ENCODE measurements at regions of chr7 and their contacts with region 1.

Region 1: DNA sequence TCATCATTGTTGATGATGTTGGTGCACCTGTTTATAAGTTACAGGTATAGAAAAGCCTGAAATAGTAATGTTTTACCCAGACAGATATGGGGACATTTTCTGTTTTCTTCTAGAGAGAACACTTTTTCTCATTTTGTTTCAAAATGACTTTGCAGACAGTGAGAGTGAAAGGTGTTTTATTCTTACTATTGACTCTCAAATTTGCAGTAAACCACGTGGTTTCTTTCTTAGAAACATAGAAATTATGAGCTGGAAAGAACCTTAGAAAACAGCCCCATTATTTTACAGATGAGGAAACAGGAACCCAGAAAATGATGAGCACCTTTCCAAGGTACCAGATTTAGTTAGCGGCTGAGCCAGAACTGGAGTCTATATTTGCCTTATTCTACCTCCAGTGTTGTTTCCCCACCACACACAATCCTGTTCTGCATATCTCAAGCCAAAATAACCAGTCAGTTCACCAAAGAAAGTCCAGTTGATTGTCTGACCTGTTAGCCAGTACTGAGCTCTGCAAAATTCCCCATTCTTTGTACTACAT is 138.9 kb upstream of the AHR start:
- DNase-seq: peak; percentile 66
- H3K4me3 Mint-ChIP-seq: peak overlapping the region; percentile 2
- H3K27ac Mint-ChIP-seq: peak overlapping the region; percentile 78
- H3K4me1 Mint-ChIP-seq: peaks cover 37% of the 10 kb centered on the region
- H3K27me3 Mint-ChIP-seq: peaks cover 13% of the 10 kb centered on the region

Region 2: DNA sequence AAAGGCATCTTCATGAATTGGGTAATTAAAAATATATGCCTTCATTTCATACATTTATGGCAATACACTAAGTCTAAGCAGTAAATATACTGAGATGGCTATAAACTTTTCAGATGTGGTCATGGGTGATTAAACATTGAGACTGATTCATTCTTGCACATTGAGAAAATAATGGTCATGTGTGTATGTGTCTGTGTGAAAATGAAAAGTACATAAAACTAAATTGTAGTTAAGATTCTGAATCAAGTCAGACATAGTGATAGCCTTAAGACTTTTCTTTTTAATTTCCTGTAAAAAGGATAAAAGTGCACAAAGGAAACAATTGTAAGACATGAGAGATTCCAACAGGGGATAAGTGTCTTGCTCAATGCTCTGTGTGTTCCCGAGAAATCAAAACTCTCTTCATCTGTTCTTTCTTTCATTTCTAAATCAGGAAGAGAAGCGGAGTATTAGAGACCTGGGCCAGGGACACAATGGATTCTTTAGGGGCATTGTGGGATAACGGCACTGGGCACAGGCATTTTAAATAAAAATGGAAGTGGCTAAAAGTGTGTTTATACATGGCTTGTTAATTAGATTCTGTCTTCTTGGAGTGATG is 208.0 kb before region 1 on chr7:
- intact Hi-C with region 1: no loop called
- DNase-seq: no peak
- H3K4me3 Mint-ChIP-seq: no peak overlapping the region
- H3K27ac Mint-ChIP-seq: no peak overlapping the region
- H3K4me1 Mint-ChIP-seq: no peaks in the 10 kb centered on the region
- H3K27me3 Mint-ChIP-seq: peaks cover 6% of the 10 kb centered on the region

Region 3: DNA sequence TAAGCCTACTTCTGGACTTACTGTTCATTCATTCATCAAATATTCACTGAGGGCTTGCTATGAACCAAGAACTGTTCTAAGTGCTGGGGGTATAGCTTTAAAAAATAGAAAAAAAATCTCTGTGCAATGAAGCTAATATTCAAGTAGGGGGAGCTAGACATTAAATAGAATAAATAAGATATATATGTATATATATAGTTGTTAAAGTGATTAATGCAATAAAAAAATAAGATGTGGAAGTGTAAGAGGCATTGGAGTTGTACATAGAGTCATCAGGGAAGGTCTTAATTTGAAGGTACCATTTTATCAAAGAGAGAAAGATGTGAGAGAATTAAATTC is 96.6 kb before region 1 on chr7:
- intact Hi-C with region 1: loop called (anchors 5 kb)
- DNase-seq: no peak
- H3K4me3 Mint-ChIP-seq: no peak overlapping the region
- H3K27ac Mint-ChIP-seq: no peak overlapping the region
- H3K4me1 Mint-ChIP-seq: peaks cover 10% of the 10 kb centered on the region
- H3K27me3 Mint-ChIP-seq: no peaks in the 10 kb centered on the region

Region 4: DNA sequence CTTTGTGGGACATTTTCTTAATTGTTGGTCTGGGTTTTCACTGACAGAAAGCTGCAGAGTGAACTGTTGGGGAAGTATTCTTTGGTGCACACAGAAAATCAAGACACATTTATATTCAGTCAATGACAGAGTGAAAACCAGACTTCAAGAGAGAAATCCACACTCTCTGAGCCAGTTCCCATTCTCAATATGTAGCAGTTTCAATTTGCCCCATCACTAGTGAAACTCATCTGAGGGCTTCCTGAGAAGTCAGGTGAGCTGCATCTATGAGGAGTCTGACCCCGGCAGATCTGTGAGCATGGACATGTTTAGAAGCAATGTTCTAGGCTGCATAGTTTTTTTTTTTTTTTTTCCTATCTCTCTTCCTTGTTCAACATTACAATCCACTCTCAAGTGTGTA is 24.8 kb before region 1 on chr7:
- intact Hi-C with region 1: loop called (anchors 1 kb)
- DNase-seq: peak; percentile 71
- H3K4me3 Mint-ChIP-seq: peak overlapping the region; percentile 29
- H3K27ac Mint-ChIP-seq: peak overlapping the region; percentile 35
- H3K4me1 Mint-ChIP-seq: peaks cover 56% of the 10 kb centered on the region
- H3K27me3 Mint-ChIP-seq: no peaks in the 10 kb centered on the region